Left colon (tissue), 2 donors: ENCODE measurements at regions of chr2 and their contacts with region 1.

Region 1: GRCh38 chr2:24971536-24972314 is at the start of gene DNAJC27:
- DNase-seq: peak; percentile 97 to 98
- ATAC-seq: peak; percentile 90
- total RNA-seq, gene DNAJC27: 3.7 to 4.8 TPM

Region 2: GRCh38 chr2:25127646-25128045 is 155.9 kb after region 1 on chr2:
- intact Hi-C with region 1: loop called (anchors 1 to 10 kb)
- DNase-seq: no peak
- ATAC-seq: no peak